GM18951 (cell line): ENCODE measurements at regions of chrX and their contacts with region 1.

Region 1: DNA sequence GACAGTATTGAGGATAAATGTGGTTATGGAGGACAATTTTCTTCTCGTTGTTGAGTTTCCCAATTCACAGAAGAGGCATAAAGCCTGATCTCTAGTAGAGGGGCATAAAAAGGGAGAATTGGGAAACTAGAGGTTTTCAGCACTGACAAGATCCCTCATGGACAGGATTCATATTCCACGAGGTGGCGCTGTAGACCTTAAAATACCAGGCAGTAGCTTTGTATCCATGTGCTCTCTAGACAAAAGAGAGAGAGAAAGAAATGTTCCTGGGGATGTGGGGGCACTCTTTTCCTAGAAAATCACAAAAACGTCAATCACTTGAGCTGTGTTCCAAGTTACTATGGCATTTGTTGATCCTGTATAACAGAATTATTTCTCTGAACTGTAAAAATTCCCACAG is 128.3 kb downstream of the MAGEE1 start:
- POLR2A ChIP-seq: no peak

Region 2: GRCh38 chrX:77628294-77629025 is 1072.6 kb after region 1 on chrX:
- in situ Hi-C with region 1: loop called (anchors 25 kb)
- POLR2A ChIP-seq: no peak